ENCODE measurements at regions of chr15 and their contacts with region 1.

Region 1: DNA sequence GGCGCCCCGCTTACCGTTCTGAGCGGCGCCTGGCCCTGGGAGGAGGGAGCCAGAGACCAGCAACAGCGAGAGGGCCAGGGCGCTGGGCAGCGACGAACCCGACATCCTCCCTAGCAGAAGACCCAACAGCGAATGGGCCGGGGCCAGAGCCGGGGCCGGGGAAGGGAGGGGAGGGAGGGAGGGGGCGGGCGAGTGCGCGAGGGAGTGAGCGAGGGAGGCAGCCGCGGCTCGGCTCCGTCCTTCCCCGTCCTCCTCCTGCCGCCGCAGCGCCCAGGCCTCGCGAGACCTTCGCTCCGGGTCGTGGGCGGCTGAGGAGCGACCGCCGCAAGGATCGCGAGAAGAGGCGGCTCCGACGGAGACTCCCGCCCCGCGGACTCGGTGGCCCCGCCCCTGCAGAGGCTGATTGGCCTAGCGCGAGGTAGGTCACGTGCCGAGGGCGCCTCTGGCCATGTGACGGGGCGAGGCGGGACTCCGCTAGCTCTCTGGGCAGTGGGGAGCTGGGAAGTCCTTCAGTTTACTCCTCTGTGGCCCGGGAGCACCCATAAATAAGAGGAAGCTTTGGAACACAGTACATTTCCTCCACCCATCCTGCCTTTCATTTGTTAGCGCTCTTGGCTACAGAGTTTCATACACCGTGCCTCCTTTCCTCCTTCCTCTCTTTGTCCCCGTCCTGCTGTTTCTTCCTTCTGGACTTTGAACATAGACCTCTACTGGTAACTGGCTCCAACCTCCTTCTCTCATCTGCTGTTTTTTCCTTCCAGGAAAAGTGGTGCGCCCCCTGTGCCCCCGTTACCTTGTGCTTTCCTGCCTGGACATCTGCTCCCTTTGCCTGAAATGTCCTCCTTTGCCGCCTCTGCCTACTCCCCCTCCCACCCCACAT is at the start of gene NPTN:
- DNase-seq: peak; percentile 94 to 99 (median 98)
- ATAC-seq: peak; percentile 89
- H3K4me3 ChIP-seq: peak within 1 kb of the TSS; percentile 86
- H3K4me3 Mint-ChIP-seq: peak within 1 kb of the TSS; percentile 93
- H3K27ac ChIP-seq: peak within 1 kb of the TSS; percentile 8 to 62
- H3K27ac Mint-ChIP-seq: peak within 1 kb of the TSS; percentile 60
- H3K4me1 ChIP-seq: peaks cover 24% of the 10 kb centered on the region
- H3K4me1 Mint-ChIP-seq: peaks cover 54% of the 10 kb centered on the region
- H3K27me3 ChIP-seq: no peaks in the 10 kb centered on the region
- H3K27me3 Mint-ChIP-seq: peaks cover 9% of the 10 kb centered on the region
- CTCF ChIP-seq: no peak
- total RNA-seq, gene NPTN: 9.3 to 13.5 TPM

Region 2: GRCh38 chr15:72117486-72118399 is 1515.6 kb before region 1 on chr15 and contains the start of gene MYO9A:
- CTCF ChIA-PET with region 1: no interaction called
- POLR2A ChIA-PET with region 1: no interaction called
- intact Hi-C with region 1: loop called in 1 of 2 experiments (anchors 10 kb)
- DNase-seq: peak; percentile 97 to 99 (median 99)
- ATAC-seq: peak; percentile 79
- H3K4me3 ChIP-seq: peak within 1 kb of the TSS; percentile 74
- H3K4me3 Mint-ChIP-seq: peak within 1 kb of the TSS; percentile 98
- H3K27ac ChIP-seq: peak within 1 kb of the TSS; percentile 91 to 92
- H3K27ac Mint-ChIP-seq: peak within 1 kb of the TSS; percentile 97
- H3K4me1 ChIP-seq: peaks cover 15% of the 10 kb centered on the region
- H3K4me1 Mint-ChIP-seq: peaks cover 60% of the 10 kb centered on the region
- H3K27me3 ChIP-seq: no peaks in the 10 kb centered on the region
- H3K27me3 Mint-ChIP-seq: no peaks in the 10 kb centered on the region
- CTCF ChIP-seq: no peak
- total RNA-seq, gene MYO9A: 23.4 to 29.1 TPM

Region 3: DNA sequence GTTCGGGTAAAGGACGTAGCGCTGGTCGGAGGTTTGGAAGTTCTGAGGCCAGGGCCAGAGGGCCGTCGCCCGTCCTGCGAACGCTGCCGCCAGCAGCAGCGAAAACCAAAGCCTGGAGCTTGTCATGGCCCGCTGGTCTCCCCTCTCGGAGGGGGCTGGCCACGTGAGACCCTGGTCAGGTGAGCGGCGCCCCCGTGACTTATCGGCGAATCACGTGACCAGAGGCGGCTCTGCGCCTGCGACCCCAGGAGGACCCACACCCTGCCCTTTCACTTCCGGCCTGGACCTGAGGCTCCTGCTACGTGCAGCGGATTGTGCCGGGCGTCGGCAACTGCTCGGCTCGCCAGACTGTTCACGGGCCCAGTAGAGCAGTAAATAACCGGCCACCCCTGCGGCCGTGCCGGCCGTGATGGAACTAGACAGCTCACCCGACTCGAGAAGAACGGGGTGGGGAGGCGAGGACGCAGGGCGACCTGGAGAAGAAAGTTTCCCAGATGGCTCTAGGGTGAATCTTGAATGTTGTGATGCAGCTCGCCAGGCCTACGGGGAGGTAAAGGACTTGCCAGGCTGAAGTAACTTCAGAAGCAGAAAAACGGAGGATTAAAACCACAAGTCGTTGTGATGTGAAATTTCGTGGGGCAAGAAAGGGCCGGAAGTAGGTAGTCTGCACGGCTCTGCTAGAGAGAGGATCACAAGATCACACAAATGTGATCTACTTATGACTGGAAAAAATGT is 1257.3 kb before region 1 on chr15 and contains the start of gene HEXA:
- CTCF ChIA-PET with region 1: no interaction called
- POLR2A ChIA-PET with region 1: no interaction called
- intact Hi-C with region 1: loop called in 1 of 2 experiments (anchors 10 kb)
- DNase-seq: peak; percentile 89 to 97 (median 94)
- ATAC-seq: peak; percentile 68
- H3K4me3 ChIP-seq: peak within 1 kb of the TSS; percentile 87
- H3K4me3 Mint-ChIP-seq: peak within 1 kb of the TSS; percentile 94
- H3K27ac ChIP-seq: peak within 1 kb of the TSS; percentile 76 to 86
- H3K27ac Mint-ChIP-seq: peak within 1 kb of the TSS; percentile 96
- H3K4me1 ChIP-seq: peaks cover 28% of the 10 kb centered on the region
- H3K4me1 Mint-ChIP-seq: peaks cover 57% of the 10 kb centered on the region
- H3K27me3 ChIP-seq: no peaks in the 10 kb centered on the region
- H3K27me3 Mint-ChIP-seq: peaks cover 9% of the 10 kb centered on the region
- CTCF ChIP-seq: no peak
- total RNA-seq, gene HEXA: 66.3 to 66.9 TPM

Region 4: GRCh38 chr15:73560501-73561117 is 72.7 kb before region 1 on chr15:
- CTCF ChIA-PET with region 1: interaction called, 27 read pairs
- POLR2A ChIA-PET with region 1: interaction called, 3 read pairs
- intact Hi-C with region 1: loop called (anchors 1 kb)
- DNase-seq: peak in 4 of 14 experiments; percentile 9 to 66 (median 64)
- ATAC-seq: peak; percentile 55
- H3K4me3 ChIP-seq: no peak overlapping the region
- H3K4me3 Mint-ChIP-seq: no peak overlapping the region
- H3K27ac ChIP-seq: no peak overlapping the region
- H3K27ac Mint-ChIP-seq: no peak overlapping the region
- H3K4me1 ChIP-seq: no peaks in the 10 kb centered on the region
- H3K4me1 Mint-ChIP-seq: peaks cover 5% of the 10 kb centered on the region
- H3K27me3 ChIP-seq: no peaks in the 10 kb centered on the region
- H3K27me3 Mint-ChIP-seq: no peaks in the 10 kb centered on the region
- CTCF ChIP-seq: peak; percentile 73

Region 5: DNA sequence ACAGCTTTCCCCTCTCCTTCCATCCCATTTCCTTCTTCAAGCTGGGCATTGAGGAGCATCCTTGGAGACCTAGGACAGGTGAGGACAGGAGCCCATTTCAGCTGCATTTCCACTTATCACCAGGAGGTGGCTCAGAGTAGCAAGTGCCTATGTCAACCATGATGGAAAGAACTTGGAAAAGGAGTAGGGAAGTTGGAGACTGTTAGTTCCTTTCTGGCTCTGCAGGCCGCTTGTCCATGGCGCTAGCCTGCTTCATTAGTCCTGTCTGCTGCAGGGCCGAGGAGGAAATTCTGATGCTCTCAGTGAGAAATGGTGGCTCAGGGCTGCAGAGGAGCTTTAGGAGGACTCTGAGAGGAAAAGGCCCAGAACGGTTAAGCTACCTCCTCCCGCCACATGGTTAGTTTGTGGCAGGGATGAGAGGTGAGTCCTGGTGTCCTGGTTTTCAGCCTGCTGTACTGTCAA is 43.8 kb after region 1 on chr15:
- CTCF ChIA-PET with region 1: interaction called, 16 read pairs
- POLR2A ChIA-PET with region 1: interaction called, 4 read pairs
- intact Hi-C with region 1: no loop called
- DNase-seq: peak; percentile 23 to 76 (median 43)
- ATAC-seq: peak; percentile 41
- H3K4me3 ChIP-seq: no peak overlapping the region
- H3K4me3 Mint-ChIP-seq: no peak overlapping the region
- H3K27ac ChIP-seq: no peak overlapping the region
- H3K27ac Mint-ChIP-seq: no peak overlapping the region
- H3K4me1 ChIP-seq: no peaks in the 10 kb centered on the region
- H3K4me1 Mint-ChIP-seq: no peaks in the 10 kb centered on the region
- H3K27me3 ChIP-seq: peaks cover 12 to 26% of the 10 kb centered on the region in 2 experiments
- H3K27me3 Mint-ChIP-seq: peaks cover 41% of the 10 kb centered on the region
- CTCF ChIP-seq: peak; percentile 86

Region 6: GRCh38 chr15:73818308-73818985 is 185.1 kb after region 1 on chr15:
- CTCF ChIA-PET with region 1: no interaction called
- POLR2A ChIA-PET with region 1: no interaction called
- intact Hi-C with region 1: no loop called
- DNase-seq: no peak
- ATAC-seq: no peak
- H3K4me3 ChIP-seq: no peak overlapping the region
- H3K4me3 Mint-ChIP-seq: no peak overlapping the region
- H3K27ac ChIP-seq: no peak overlapping the region
- H3K27ac Mint-ChIP-seq: no peak overlapping the region
- H3K4me1 ChIP-seq: no peaks in the 10 kb centered on the region
- H3K4me1 Mint-ChIP-seq: no peaks in the 10 kb centered on the region
- H3K27me3 ChIP-seq: no peaks in the 10 kb centered on the region
- H3K27me3 Mint-ChIP-seq: peaks cover 21% of the 10 kb centered on the region
- CTCF ChIP-seq: no peak

Region 7: DNA sequence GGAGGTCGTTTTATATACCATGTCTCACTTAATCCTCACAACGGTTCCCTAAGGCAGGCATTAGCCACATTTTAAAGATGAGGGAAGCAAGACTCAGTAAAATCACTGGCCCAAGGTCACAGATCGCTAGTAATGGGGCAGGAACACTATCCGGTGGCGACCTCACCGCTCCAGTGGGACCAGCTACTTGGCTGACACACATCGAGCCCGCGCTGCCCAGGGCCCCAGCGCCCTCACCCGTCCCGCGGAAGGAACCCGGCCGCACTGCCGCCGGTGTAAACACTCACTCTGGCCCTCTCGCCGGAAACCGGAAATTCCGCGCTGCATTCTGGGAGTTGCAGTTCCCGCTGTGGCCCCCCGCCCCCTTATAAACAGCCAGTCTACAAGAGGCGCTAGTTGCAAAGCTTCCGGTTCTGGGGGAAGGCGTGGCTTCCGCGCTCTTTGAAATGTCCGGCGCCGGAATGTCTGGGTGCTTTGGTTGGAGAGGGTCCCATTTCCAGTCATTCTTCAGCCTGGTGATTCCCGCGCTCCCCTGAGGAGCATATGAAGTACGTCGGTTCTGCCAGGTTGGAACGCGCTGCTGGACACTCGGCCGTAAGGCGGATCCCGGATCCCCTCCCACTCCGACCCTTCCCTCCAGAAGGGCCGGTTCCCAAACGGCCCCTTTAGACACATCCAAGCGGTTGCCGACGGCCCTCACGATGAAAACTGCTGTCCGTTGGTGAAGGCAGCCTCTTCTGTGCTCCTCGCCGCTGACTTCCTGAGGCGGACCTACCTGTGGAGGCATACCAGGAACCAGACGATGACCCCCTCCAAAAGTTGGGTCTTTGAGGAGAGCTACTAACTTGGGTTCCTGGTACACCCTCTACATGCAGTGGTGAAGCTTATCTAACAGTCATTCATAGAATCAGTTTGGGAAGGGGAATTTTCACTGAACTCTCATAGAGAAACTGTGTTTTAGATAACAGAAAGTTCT is 827.8 kb after region 1 on chr15 and contains the start of gene UBL7:
- CTCF ChIA-PET with region 1: no interaction called
- POLR2A ChIA-PET with region 1: no interaction called
- intact Hi-C with region 1: loop called in 1 of 2 experiments (anchors 5 kb)
- DNase-seq: peak; percentile 91 to 97 (median 96)
- ATAC-seq: peak; percentile 98
- H3K4me3 ChIP-seq: peak within 1 kb of the TSS; percentile 92
- H3K4me3 Mint-ChIP-seq: peak within 1 kb of the TSS; percentile 97
- H3K27ac ChIP-seq: peak within 1 kb of the TSS; percentile 61 to 62
- H3K27ac Mint-ChIP-seq: peak within 1 kb of the TSS; percentile 84
- H3K4me1 ChIP-seq: peaks cover 19% of the 10 kb centered on the region
- H3K4me1 Mint-ChIP-seq: peaks cover 53% of the 10 kb centered on the region
- H3K27me3 ChIP-seq: no peaks in the 10 kb centered on the region
- H3K27me3 Mint-ChIP-seq: no peaks in the 10 kb centered on the region
- CTCF ChIP-seq: peak; percentile 15
- total RNA-seq, gene UBL7: 14.3 to 17.1 TPM